Activated T-helper 2 cell treated with anti-CD3 and anti-CD28 coated beads, Interferon-gamma antibody, Interleukin-2, Interleukin-4, amounts not matched to agents 10 μg/mL and 5 μg/mL and 100 μg/mL, durations not matched to agents 14 hours and 24 hours and 36 hours (primary cell): ENCODE measurements at regions of chr10 and their contacts with region 1.

Region 1: DNA sequence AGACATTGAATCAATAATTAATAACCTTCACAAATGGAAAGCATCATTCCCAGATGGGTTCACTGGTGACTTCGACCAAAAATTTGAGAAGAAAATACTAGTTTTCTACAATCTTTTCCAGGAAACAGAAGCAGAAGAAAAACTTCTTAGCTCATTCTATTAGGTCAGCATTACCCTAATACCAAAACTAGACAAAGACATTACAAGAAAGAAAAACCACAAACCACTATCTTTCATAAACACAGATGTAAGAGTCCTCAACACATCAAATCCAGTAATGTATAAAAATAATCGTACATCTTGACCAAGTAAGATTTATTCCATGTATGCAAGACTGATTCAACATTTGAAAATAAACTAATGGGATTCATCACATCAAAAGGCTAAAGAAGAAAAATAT is 64.0 kb upstream of the CDK1 start:
- DNase-seq: no peak
- H3K4me3 Mint-ChIP-seq: no peak overlapping the region
- H3K27ac Mint-ChIP-seq: no peak overlapping the region
- H3K4me1 Mint-ChIP-seq: peaks cover 27% of the 10 kb centered on the region
- H3K27me3 Mint-ChIP-seq: peaks cover 1% of the 10 kb centered on the region

Region 2: DNA sequence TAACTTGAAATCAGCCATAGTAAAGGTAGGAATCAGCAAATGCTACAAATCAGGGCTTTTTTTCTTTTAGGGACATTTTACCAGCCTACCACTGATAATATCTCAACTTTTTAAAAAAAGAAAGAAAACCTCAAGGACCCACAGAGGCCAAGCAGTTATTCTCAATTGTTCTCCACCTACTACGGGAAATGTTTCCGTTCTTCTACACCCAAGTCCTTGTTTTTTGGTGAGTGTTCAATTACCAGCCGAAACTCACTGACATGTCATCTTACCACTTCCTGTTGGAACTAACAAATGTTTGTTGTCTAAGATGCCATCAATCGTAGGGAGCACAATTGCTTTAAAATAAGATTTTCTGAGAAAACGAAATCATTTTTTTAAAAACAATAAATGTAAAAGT is 13.8 kb after region 1 on chr10:
- intact Hi-C with region 1: loop called (anchors 2 kb)
- DNase-seq: no peak
- H3K4me3 Mint-ChIP-seq: peak overlapping the region; percentile 28
- H3K27ac Mint-ChIP-seq: peak overlapping the region; percentile 36
- H3K4me1 Mint-ChIP-seq: peaks cover 55% of the 10 kb centered on the region
- H3K27me3 Mint-ChIP-seq: peaks cover 3% of the 10 kb centered on the region

Region 3: DNA sequence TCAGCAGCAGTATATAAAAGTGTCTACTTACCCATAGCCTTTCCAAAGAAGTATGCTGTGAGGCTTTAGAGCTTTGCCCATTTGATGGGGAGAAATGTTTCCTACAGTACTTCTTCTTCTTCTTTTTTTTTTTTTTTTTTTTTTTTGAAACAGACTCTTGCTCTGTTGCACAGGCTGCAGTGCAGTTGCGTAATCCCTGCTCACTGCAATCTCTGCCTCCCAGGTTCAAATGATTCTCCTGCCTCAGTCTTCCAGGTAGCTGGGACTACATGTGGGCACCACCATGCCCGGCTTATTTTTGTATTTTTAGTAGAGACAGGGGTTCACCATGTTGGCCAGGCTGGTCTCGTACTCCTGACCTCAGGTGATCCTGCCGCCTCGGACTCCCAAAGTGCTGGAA is 840.7 kb after region 1 on chr10:
- intact Hi-C with region 1: no loop called
- DNase-seq: no peak
- H3K4me3 Mint-ChIP-seq: no peak overlapping the region
- H3K27ac Mint-ChIP-seq: no peak overlapping the region
- H3K4me1 Mint-ChIP-seq: no peaks in the 10 kb centered on the region
- H3K27me3 Mint-ChIP-seq: no peaks in the 10 kb centered on the region